Activated naive CD4-positive, alpha-beta T cell treated with anti-CD3 and anti-CD28 coated beads for 36 hours (primary cell): ENCODE measurements at regions of chr12 and their contacts with region 1.

Region 1: GRCh38 chr12:121536899-121537813 is 43.7 kb downstream of the KDM2B start:
- DNase-seq: peak; percentile 68
- H3K4me3 Mint-ChIP-seq: peak overlapping the region; percentile 70
- H3K27ac Mint-ChIP-seq: peak overlapping the region; percentile 69
- H3K4me1 Mint-ChIP-seq: peaks cover 43% of the 10 kb centered on the region
- H3K27me3 Mint-ChIP-seq: no peaks in the 10 kb centered on the region

Region 2: DNA sequence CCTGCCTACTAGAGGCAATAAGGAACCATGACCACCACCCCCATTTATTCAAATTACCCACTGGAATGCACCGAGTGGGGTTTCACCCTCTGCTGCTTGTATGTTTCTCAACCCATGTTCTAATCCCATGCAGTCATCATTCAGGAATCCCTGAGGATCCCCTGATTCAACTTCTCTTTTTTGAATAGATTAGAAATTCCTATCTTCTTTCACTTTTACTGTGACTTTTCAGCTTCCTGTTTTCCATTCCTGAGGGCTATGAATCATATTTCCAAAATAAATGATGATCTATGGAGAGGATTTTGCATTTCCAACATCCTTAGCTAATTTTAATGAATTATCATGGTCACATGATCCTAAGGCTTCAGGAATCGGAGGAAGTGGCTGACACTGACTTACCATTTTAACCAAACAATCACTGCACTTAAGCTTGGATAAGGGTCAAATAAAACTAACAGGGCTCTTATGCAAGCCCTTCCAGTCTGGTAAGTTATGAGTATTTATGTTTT is 346.6 kb before region 1 on chr12:
- CTCF ChIA-PET with region 1: no interaction called
- intact Hi-C with region 1: no loop called
- DNase-seq: no peak
- H3K4me3 Mint-ChIP-seq: no peak overlapping the region
- H3K27ac Mint-ChIP-seq: no peak overlapping the region
- H3K4me1 Mint-ChIP-seq: peaks cover 7% of the 10 kb centered on the region
- H3K27me3 Mint-ChIP-seq: no peaks in the 10 kb centered on the region

Region 3: DNA sequence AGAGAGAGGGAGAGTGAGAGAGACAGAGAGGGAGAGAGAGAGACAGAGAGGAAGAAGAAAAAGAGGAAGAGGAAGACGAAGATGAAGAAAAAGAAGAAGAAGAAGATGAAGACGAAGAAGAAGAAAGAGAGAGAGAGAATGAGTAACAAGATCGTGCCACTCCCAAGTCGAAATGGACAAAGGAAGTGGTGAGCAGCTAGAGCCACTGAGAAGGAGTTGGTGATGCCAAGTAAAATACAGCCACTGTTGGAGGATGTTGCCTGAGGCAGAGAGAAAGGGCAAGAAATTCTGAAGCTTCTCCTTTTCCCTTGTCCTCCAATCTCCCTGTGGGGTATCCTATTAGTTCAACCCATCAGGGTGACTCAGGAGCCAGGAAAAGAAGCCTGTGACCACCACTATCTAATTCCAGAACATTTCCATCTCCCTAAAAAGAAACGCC is 172.5 kb before region 1 on chr12:
- CTCF ChIA-PET with region 1: no interaction called
- intact Hi-C with region 1: no loop called
- DNase-seq: no peak
- H3K4me3 Mint-ChIP-seq: no peak overlapping the region
- H3K27ac Mint-ChIP-seq: no peak overlapping the region
- H3K4me1 Mint-ChIP-seq: no peaks in the 10 kb centered on the region
- H3K27me3 Mint-ChIP-seq: peaks cover 15% of the 10 kb centered on the region

Region 4: DNA sequence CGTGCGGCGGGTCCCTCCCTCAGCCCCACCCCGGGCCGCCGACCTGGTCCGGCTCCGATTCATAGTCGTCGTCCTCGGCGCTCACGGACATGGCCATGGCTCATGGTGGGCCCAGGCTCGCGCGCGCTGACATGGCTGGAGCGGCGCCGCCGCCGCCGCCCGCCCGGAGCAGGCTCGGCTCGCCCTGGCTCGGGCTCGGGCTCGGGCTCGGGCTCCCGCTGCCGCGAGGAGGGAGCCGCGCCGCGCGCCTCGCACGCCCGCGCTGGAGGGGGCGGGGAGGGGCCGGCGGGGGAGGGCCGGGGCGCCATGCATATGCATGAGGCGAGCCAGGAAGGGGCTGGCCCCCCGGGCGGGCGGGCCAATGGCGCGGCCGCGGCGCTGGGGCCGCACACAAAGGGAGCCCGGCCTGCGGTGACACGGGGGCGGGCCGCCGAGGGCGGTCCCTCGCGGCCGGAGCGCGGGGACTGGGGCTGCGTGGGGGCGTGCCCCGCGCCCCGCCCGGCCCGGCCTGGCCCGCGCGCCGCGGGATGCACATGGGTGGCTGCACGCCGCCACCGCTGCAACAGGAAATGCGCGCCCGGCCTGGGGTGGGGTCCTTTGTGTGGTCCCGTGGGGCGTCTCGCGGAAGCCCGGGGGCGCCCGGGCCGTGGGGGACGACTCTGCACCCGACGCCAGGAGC is 69.9 kb before region 1 on chr12:
- CTCF ChIA-PET with region 1: no interaction called
- intact Hi-C with region 1: loop called (anchors 2 kb)
- DNase-seq: peak; percentile 87
- H3K4me3 Mint-ChIP-seq: peak overlapping the region; percentile 43
- H3K27ac Mint-ChIP-seq: no peak overlapping the region
- H3K4me1 Mint-ChIP-seq: peaks cover 19% of the 10 kb centered on the region
- H3K27me3 Mint-ChIP-seq: no peaks in the 10 kb centered on the region

Region 5: DNA sequence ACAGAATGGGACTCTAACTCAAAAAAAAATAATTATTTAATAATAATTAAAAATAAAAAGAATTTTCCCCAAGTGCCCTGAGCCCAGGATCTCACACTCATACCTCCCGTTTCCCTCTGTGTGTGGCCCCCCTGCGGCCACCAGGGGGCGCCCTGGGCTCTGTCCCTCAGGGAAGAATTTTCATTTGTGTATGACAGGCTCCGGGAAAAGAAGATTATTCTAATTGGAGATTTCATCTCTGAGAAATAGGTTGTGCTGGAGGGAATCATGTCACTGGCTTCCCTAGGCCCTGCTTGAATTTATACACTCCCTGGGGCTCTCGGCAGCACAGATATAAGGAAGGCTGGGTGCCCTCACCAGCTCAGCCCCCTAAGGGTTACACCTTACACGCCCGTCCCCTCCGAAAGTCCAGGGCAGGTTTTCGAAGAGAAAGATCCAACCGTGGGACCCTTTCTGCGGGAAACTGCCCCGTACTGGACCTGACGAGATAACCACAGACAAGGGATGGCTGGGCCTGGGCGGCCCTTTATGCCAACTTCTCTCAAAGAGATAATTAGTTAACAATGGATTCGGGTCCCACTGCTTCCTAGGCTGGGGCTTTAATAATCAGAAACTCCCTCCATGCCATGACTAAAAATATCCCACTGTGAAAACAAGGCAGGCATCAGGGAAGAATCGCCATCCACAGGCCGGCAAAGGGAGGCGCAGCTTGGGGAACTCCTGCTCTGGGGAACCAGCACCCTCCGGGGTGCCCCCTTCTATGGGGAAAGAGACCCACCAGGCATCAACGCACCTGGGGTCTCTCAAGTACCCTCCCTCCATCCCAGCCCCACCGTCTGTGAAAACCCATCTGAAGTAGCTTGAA is 37.0 kb before region 1 on chr12:
- CTCF ChIA-PET with region 1: interaction called, 5 read pairs
- intact Hi-C with region 1: loop called (anchors 1 kb)
- DNase-seq: peak; percentile 83
- H3K4me3 Mint-ChIP-seq: no peak overlapping the region
- H3K27ac Mint-ChIP-seq: no peak overlapping the region
- H3K4me1 Mint-ChIP-seq: peaks cover 9% of the 10 kb centered on the region
- H3K27me3 Mint-ChIP-seq: no peaks in the 10 kb centered on the region

Region 6: GRCh38 chr12:121579981-121580868 is 43.1 kb after region 1 on chr12:
- CTCF ChIA-PET with region 1: interaction called, 3 read pairs
- intact Hi-C with region 1: loop called (anchors 2 kb)
- DNase-seq: peak; percentile 85
- H3K4me3 Mint-ChIP-seq: peak overlapping the region; percentile 90
- H3K27ac Mint-ChIP-seq: peak overlapping the region; percentile 92
- H3K4me1 Mint-ChIP-seq: peaks cover 16% of the 10 kb centered on the region
- H3K27me3 Mint-ChIP-seq: no peaks in the 10 kb centered on the region

Region 7: GRCh38 chr12:121590476-121591143 is 53.5 kb after region 1 on chr12:
- CTCF ChIA-PET with region 1: no interaction called
- intact Hi-C with region 1: loop called (anchors 2 kb)
- DNase-seq: peak; percentile 80
- H3K4me3 Mint-ChIP-seq: peak overlapping the region; percentile 85
- H3K27ac Mint-ChIP-seq: peak overlapping the region; percentile 96
- H3K4me1 Mint-ChIP-seq: peaks cover 30% of the 10 kb centered on the region
- H3K27me3 Mint-ChIP-seq: no peaks in the 10 kb centered on the region